Activated CD4-positive, alpha-beta T cell treated with anti-CD3 and anti-CD28 coated beads for 36 hours (primary cell): ENCODE measurements at regions of chr12 and their contacts with region 1.

Region 1: GRCh38 chr12:110742718-110743570 is at the start of gene PPP1CC:
- DNase-seq: peak; percentile 95
- ATAC-seq: peak; percentile 85
- H3K4me3 Mint-ChIP-seq: peak within 1 kb of the TSS; percentile 98
- H3K27ac Mint-ChIP-seq: peak within 1 kb of the TSS; percentile 99
- H3K4me1 Mint-ChIP-seq: peaks cover 34% of the 10 kb centered on the region
- H3K27me3 Mint-ChIP-seq: no peaks in the 10 kb centered on the region
- total RNA-seq, gene PPP1CC: 201 to 283 TPM

Region 2: GRCh38 chr12:110583137-110584059 is 159.5 kb before region 1 on chr12 and contains the start of gene PPTC7:
- CTCF ChIA-PET with region 1: no interaction called
- POLR2A ChIA-PET with region 1: no interaction called
- intact Hi-C with region 1: loop called in 1 of 2 experiments (anchors 2 kb)
- DNase-seq: peak; percentile 99
- ATAC-seq: peak; percentile 86
- H3K4me3 Mint-ChIP-seq: peak within 1 kb of the TSS; percentile 91
- H3K27ac Mint-ChIP-seq: peak within 1 kb of the TSS; percentile 99
- H3K4me1 Mint-ChIP-seq: peaks cover 59% of the 10 kb centered on the region
- H3K27me3 Mint-ChIP-seq: no peaks in the 10 kb centered on the region
- total RNA-seq, gene PPTC7: 33.4 to 36.5 TPM

Region 3: DNA sequence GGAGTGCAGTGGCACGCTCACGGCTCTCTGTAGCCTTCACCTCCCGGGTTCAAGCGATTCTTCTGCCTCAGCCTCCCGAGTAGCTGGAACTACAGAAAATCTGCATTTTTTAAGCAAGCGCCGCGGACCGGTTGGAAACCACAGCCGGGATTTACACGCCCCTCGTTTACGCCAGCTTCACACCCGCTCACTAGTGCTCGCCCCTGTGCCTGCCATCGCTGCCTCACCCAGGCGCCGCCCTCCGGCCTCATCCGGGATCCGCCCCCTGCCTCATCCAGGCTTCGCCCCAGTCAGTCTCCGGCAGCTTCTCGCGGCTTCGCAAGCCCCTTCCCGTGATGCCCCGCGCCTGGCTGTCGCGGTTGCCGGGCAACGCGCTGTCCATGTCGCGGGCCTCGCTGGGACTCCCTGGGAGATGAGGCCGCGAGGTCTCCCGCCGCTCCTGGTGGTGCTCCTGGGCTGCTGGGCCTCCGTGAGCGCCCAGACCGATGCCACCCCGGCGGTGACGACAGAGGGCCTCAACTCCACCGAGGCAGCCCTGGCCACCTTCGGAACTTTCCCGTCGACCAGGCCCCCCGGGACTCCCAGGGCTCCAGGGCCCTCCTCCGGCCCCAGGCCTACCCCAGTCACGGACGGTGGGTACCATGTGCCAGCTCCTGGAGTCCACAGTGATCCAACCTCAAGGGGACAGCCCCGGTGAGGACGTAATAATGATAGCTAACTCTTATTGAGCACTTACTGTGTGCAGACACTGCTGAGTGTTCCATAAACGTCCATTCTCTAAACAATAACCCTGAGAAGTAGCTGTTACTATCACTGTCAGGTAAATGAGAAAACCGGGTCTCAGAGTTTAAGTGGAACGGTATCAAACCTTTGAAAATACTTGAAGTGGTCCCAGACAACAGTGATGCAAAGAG is 128.9 kb before region 1 on chr12 and contains the start of gene TCTN1:
- CTCF ChIA-PET with region 1: interaction called, 4 read pairs
- POLR2A ChIA-PET with region 1: no interaction called
- intact Hi-C with region 1: loop called in 1 of 2 experiments (anchors 2 kb)
- DNase-seq: peak; percentile 99
- ATAC-seq: peak; percentile 99
- H3K4me3 Mint-ChIP-seq: peak within 1 kb of the TSS; percentile 78
- H3K27ac Mint-ChIP-seq: peak within 1 kb of the TSS; percentile 67
- H3K4me1 Mint-ChIP-seq: peaks cover 12% of the 10 kb centered on the region
- H3K27me3 Mint-ChIP-seq: no peaks in the 10 kb centered on the region
- total RNA-seq, gene TCTN1: 7.2 to 7.3 TPM

Region 4: GRCh38 chr12:110689281-110690126 is 53.4 kb before region 1 on chr12:
- CTCF ChIA-PET with region 1: no interaction called
- POLR2A ChIA-PET with region 1: no interaction called
- intact Hi-C with region 1: loop called in 1 of 2 experiments (anchors 2 kb)
- DNase-seq: peak; percentile 64
- ATAC-seq: peak; percentile 78
- H3K4me3 Mint-ChIP-seq: peak overlapping the region; percentile 77
- H3K27ac Mint-ChIP-seq: peak overlapping the region; percentile 89
- H3K4me1 Mint-ChIP-seq: peaks cover 30% of the 10 kb centered on the region
- H3K27me3 Mint-ChIP-seq: no peaks in the 10 kb centered on the region

Region 5: GRCh38 chr12:110726708-110727369 is 16.1 kb before region 1 on chr12:
- CTCF ChIA-PET with region 1: interaction called, 9 read pairs
- POLR2A ChIA-PET with region 1: interaction called, 14 read pairs
- intact Hi-C with region 1: loop called in 1 of 2 experiments (anchors 2 kb)
- DNase-seq: no peak
- ATAC-seq: no peak
- H3K4me3 Mint-ChIP-seq: no peak overlapping the region
- H3K27ac Mint-ChIP-seq: peak overlapping the region; percentile 87
- H3K4me1 Mint-ChIP-seq: peaks cover 57% of the 10 kb centered on the region
- H3K27me3 Mint-ChIP-seq: no peaks in the 10 kb centered on the region

Region 6: GRCh38 chr12:111599459-111600204 is 856.7 kb after region 1 on chr12:
- CTCF ChIA-PET with region 1: no interaction called
- POLR2A ChIA-PET with region 1: no interaction called
- intact Hi-C with region 1: loop called in 1 of 2 experiments (anchors 2 kb)
- DNase-seq: peak; percentile 91
- ATAC-seq: peak; percentile 83
- H3K4me3 Mint-ChIP-seq: peak overlapping the region; percentile 81
- H3K27ac Mint-ChIP-seq: peak overlapping the region; percentile 92
- H3K4me1 Mint-ChIP-seq: peaks cover 17% of the 10 kb centered on the region
- H3K27me3 Mint-ChIP-seq: no peaks in the 10 kb centered on the region